Activated CD4-positive, alpha-beta T cell treated with anti-CD3 and anti-CD28 coated beads, Interleukin-2, amount 10 ng/mL, durations not matched to agents 24 days and 14 days (primary cell): ENCODE measurements at regions of chr11 and their contacts with region 1.

Region 1: GRCh38 chr11:109853156-109853776 is 239.9 kb upstream of the ZC3H12C start:
- DNase-seq: peak; percentile 60
- H3K4me3 Mint-ChIP-seq: no peak overlapping the region
- H3K27ac Mint-ChIP-seq: no peak overlapping the region
- H3K4me1 Mint-ChIP-seq: no peaks in the 10 kb centered on the region
- H3K27me3 Mint-ChIP-seq: peaks cover 5% of the 10 kb centered on the region

Region 2: DNA sequence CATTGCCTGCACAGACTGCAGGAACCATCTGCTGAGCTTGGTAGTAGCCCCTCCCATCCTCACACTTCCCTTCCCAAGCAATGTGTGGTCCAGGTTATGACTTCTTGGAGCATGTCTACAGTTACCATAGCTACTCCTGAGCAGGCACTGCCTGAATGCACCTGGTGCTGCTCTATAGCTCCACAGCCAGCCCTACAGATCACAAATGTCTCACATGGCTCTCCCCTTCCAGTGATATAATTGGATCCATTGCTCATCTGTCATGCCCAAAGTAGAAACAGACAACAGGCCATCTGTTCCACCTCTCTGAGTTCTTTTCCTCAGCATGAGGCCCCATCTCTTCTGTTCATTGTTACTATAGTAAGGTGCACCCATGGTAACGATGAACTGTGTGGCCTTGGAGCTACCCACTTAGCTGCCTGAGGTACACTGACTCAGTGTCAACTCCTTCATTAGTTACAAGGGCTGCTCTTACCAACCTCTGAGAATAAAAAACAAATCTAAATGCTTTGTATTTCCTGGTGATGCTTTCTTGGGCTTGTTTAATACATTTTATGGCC is 80.3 kb before region 1 on chr11:
- intact Hi-C with region 1: no loop called
- DNase-seq: no peak
- H3K4me3 Mint-ChIP-seq: no peak overlapping the region
- H3K27ac Mint-ChIP-seq: no peak overlapping the region
- H3K4me1 Mint-ChIP-seq: no peaks in the 10 kb centered on the region
- H3K27me3 Mint-ChIP-seq: no peaks in the 10 kb centered on the region

Region 3: DNA sequence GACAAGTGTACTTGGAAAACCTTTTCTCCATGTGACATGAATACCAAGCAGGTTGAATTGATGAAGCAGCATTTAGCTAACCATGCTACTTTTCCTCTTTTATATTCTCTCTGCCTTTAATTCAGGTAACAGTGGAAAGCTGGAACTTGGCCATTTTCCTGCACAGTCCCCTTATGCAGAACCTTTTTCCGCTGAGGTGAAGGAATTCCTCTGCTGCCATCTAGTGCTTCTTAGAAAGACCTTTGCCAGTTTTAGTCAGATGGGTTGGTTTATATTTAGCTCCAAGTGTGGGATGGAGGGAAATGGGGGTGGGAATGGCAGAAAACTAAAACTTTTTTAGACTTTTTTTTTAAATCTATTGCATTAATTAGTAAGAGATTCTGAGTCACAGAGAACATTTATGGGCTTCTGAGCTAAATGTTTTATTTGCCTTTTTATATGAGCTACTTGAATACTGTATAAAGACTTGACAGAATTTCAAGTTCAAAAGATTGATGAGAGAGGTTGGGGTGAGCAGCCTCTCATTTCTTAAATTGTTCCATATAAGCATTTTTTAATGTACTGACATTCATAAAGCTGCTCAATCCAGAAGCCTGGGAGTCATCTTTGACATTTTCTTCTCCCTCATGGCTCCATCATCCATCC is 86.0 kb after region 1 on chr11:
- intact Hi-C with region 1: loop called (anchors 1 kb)
- DNase-seq: no peak
- H3K4me3 Mint-ChIP-seq: no peak overlapping the region
- H3K27ac Mint-ChIP-seq: no peak overlapping the region
- H3K4me1 Mint-ChIP-seq: peaks cover 2% of the 10 kb centered on the region
- H3K27me3 Mint-ChIP-seq: peaks cover 31% of the 10 kb centered on the region